Mammary epithelial cell (primary cell): ENCODE measurements at regions of chr6 and their contacts with region 1.

Region 1: GRCh38 chr6:13711733-13712598 is at the start of gene RANBP9:
- DNase-seq: peak; percentile 84
- H3K4me3 ChIP-seq: peak within 1 kb of the TSS; percentile 79 to 97 (median 88)
- H3K27ac ChIP-seq: peak within 1 kb of the TSS; percentile 87
- H3K4me1 ChIP-seq: peaks cover 14% of the 10 kb centered on the region
- H3K27me3 ChIP-seq: no peaks in the 10 kb centered on the region
- CTCF ChIP-seq: no peak
- total RNA-seq, gene RANBP9: 26.7 to 44.4 TPM

Region 2: DNA sequence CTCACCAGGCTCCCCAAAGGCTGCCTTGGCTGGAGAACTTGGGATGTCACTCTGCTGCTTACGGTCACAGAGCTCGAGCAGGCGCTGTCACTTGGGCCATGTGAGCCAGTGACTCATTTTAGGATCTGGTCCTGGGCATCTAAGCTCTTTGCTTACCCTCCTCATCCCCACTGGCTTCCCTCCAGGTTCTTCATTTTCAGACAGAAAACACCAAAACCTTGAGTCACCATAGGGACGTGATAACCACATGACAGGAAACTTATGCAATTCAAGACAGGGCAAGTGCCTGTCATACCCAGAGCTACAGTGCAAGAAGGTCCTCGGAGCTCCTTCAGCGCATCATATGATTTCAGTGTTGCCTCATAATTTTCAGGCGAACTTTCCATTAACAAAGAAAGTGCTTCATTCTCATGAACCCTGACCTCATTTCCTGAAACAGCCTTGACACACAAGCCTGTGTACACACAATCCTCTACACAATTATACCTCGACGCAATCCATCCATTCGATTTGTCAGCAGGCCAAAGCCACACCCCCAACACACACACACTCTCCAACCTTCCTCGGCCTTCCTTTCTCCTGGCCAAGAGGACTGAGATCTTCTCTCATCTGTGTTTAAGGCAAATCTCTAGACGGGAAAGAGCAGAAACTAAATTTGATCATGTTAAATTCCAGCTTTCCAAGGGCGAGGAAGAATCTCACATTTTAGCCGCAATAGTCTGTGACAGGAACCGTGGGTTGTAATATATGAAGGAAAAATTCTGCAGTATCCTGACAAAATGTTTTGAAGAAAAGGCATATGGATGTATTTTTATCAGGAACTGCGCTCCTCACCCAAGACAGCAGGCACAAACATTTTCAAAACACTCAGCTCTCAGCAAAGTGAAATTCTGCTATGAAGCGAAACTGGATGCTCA is 409.0 kb before region 1 on chr6:
- CTCF ChIA-PET with region 1: no interaction called
- dilution Hi-C with region 1: no loop called
- in situ Hi-C with region 1: no loop called
- intact Hi-C with region 1: no loop called
- DNase-seq: peak; percentile 80
- H3K4me3 ChIP-seq: no peak overlapping the region
- H3K27ac ChIP-seq: no peak overlapping the region
- H3K4me1 ChIP-seq: peaks cover 11% of the 10 kb centered on the region
- H3K27me3 ChIP-seq: no peaks in the 10 kb centered on the region
- CTCF ChIP-seq: no peak

Region 3: DNA sequence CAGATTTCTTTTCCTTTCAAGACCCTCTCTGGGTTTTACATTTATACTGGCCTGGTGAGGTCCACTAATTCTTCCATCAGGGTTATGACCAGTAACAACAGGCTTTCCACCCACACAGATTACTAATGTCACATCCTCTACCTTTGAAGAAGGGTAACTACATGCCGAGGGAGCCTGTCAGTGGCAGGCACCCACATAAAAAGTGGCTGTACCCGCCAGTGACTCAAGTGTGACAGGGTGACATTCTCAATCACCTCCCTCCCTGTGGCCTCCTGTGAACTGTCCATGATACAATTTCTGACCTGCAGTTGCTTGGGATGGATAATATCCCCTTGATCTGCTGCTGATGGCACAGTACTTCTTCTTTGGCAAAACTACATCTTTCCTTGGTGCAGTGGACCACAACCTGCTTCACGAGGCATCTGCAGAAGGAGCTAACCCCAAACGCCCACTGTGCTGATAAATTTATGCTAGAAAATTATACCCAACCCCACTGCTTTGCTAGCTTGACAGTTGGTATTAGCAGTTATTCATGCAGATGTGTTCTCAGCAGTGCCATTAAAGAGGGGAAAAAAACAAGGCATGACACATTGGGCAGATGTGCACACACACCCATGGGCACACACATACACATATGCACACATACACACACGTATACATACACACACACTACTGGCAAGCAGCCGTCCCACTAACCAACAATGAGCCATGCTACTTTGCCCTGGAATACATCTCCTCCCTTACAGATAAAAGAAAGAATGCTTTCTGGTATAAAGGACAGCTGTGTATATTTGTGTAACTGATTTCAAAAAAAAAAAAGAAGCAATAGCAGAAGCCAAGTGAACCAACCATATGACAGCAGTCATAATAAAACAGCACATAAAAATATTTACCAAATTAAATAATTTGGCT is 245.4 kb before region 1 on chr6:
- CTCF ChIA-PET with region 1: no interaction called
- dilution Hi-C with region 1: no loop called
- in situ Hi-C with region 1: no loop called
- intact Hi-C with region 1: no loop called
- DNase-seq: peak; percentile 17
- H3K4me3 ChIP-seq: no peak overlapping the region
- H3K27ac ChIP-seq: no peak overlapping the region
- H3K4me1 ChIP-seq: peaks cover 15% of the 10 kb centered on the region
- H3K27me3 ChIP-seq: no peaks in the 10 kb centered on the region
- CTCF ChIP-seq: no peak

Region 4: GRCh38 chr6:13635948-13636658 is 75.9 kb before region 1 on chr6:
- CTCF ChIA-PET with region 1: no interaction called
- dilution Hi-C with region 1: no loop called
- in situ Hi-C with region 1: no loop called
- intact Hi-C with region 1: loop called (anchors 5 kb)
- DNase-seq: no peak
- H3K4me3 ChIP-seq: no peak overlapping the region
- H3K27ac ChIP-seq: no peak overlapping the region
- H3K4me1 ChIP-seq: peaks cover 7% of the 10 kb centered on the region
- H3K27me3 ChIP-seq: no peaks in the 10 kb centered on the region
- CTCF ChIP-seq: no peak

Region 5: GRCh38 chr6:13733178-13733887 is 21.4 kb after region 1 on chr6:
- CTCF ChIA-PET with region 1: no interaction called
- dilution Hi-C with region 1: no loop called
- in situ Hi-C with region 1: no loop called
- intact Hi-C with region 1: loop called (anchors 2 kb)
- DNase-seq: peak; percentile 68
- H3K4me3 ChIP-seq: peak overlapping the region in 2 of 3 experiments; percentile 6 to 14
- H3K27ac ChIP-seq: peak overlapping the region; percentile 7
- H3K4me1 ChIP-seq: peaks cover 25% of the 10 kb centered on the region
- H3K27me3 ChIP-seq: no peaks in the 10 kb centered on the region
- CTCF ChIP-seq: no peak

Region 6: DNA sequence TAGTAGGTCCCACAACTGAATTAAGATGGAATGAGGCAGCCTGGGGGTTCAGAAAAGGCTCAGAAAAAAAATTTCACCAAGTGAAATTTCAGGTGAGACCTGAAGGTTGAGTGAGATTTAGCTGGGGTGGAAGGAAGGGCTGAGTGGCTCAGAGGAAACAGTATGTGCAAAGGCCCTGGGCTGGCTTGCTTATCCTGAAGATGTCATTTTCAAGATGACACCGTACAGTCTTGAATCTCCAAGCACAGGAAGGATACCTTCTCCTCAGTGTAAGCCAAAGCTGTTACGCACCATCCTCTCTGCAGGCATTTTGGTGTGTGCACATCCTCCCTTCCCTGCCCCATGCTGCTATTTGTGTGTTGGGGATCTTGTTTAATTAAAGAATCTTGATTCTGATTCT is 42.7 kb after region 1 on chr6:
- CTCF ChIA-PET with region 1: no interaction called
- dilution Hi-C with region 1: no loop called
- in situ Hi-C with region 1: no loop called
- intact Hi-C with region 1: no loop called
- DNase-seq: no peak
- H3K4me3 ChIP-seq: no peak overlapping the region
- H3K27ac ChIP-seq: no peak overlapping the region
- H3K4me1 ChIP-seq: no peaks in the 10 kb centered on the region
- H3K27me3 ChIP-seq: no peaks in the 10 kb centered on the region
- CTCF ChIP-seq: no peak

Region 7: DNA sequence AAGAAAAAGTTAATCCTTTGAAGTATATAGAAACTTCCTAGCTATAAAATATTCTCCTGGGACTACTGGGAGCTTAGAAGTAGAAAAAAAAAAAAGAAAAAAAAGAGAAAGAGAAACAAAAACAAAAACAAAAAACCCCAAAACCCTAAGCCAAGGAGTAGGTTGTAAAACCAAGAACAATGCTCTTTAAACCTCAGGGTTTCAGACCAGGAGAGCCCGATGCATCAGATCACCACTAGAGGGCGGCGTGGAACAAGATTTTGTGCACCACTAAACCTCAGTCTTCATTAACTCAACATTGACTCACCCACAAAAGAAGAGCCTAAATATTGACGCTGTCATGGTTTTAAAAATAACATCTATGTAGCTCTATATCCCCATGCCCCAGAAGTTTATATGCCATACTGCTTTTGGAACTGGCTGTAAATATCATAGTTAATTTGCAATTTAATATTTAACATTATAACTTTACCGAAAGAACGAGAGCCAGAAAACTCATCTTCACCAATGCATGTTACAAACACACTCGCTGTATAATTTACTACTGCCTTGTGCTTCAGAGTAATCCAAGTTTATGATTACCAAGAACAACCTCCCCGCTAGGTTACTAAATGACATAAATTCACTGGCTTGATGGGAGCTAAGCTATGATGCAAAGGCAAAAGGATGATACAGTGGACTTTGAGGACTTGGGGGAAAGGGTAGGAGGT is 83.2 kb after region 1 on chr6:
- CTCF ChIA-PET with region 1: no interaction called
- dilution Hi-C with region 1: no loop called
- in situ Hi-C with region 1: no loop called
- intact Hi-C with region 1: loop called (anchors 1 kb)
- DNase-seq: peak; percentile 73
- H3K4me3 ChIP-seq: no peak overlapping the region
- H3K27ac ChIP-seq: peak overlapping the region; percentile 53
- H3K4me1 ChIP-seq: peaks cover 5% of the 10 kb centered on the region
- H3K27me3 ChIP-seq: no peaks in the 10 kb centered on the region
- CTCF ChIP-seq: peak; percentile 94 to 97